ENCODE measurements at regions of chr3 and their contacts with region 1.

Region 1: DNA sequence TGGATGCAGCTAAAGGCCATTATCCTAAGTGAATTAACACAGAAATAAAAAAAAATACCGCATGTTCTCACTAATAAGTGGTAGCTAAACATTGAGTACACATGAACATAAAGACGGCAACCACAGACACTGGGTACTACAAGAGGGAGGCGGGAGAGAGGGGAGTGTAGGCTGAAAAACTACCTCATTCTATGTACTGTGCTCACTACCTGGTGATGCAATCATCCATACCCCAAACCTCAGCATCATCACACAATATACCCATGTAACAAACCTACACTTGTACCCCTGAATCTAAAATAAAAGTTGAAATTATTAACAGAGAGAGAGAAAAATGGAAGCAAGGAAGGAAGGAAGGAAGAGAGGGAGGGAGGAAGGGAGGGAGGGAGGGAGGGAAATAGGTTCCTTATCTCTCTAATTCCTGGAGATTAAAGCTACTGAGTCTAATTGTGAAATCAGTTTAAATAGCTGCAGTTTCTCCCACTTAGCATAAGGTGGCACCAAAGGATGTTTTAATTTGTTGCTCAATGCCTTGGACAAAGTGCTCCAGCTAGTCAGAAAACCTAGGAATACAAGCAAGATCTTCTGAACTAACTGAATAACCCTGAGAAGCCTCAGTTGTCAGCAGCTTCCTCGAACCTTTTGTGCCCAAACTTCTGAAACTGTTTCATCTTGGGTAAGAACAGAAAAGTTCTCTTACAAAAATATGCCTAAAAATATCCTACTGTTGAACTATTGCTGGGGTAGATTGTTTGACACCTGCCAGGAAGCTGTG is 79.4 kb upstream of the ATP11B start:
- DNase-seq: peak; percentile 51
- ATAC-seq: peak; percentile 58
- H3K4me3 ChIP-seq: no peak overlapping the region
- H3K4me3 Mint-ChIP-seq: no peak overlapping the region
- H3K27ac ChIP-seq: no peak overlapping the region
- H3K27ac Mint-ChIP-seq: no peak overlapping the region
- H3K4me1 ChIP-seq: no peaks in the 10 kb centered on the region
- H3K4me1 Mint-ChIP-seq: peaks cover 4% of the 10 kb centered on the region
- H3K27me3 ChIP-seq: no peaks in the 10 kb centered on the region
- H3K27me3 Mint-ChIP-seq: peaks cover 5% of the 10 kb centered on the region
- CTCF ChIP-seq: peak; percentile 70

Region 2: DNA sequence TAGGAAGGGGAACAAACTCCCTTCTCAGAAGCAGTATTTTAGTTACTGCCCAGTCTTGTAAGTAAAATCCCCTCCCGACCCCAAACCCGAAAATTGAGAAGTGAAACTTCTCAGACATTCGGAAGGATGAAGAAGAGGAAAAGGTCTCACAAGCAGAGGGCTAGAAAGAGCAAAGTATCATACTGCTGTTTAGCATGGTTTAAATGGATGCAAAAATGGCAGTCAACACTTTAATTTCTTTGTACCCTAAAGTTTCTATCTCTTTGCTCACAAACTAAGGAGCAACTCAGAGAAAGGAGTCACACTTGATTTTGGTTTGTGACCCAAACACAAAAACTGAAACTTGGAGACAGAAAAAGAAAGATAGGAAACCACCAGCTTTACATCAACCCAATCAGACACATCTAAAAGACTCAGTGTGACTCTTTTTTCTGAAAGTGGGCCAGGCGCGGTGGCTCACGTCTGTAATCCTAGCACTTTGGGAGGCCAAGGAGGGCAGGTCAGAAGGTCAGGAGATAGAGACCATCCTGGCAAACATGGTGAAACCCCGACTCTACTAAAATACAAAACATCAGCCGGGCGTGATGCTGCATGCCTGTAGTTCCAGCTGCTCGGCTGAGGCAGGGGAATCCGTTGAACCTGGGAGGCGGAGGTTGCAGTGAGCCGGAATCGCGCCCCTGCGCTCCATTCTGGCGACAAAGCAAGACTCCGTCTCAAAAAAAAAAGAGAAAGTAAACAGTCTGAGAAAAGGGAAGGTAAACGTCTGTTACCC is 16.2 kb after region 1 on chr3:
- CTCF ChIA-PET with region 1: interaction called, 17 read pairs
- POLR2A ChIA-PET with region 1: no interaction called
- intact Hi-C with region 1: no loop called
- DNase-seq: peak; percentile 70
- ATAC-seq: peak; percentile 62
- H3K4me3 ChIP-seq: peak overlapping the region in 4 of 5 experiments; percentile 18 to 50 (median 37)
- H3K4me3 Mint-ChIP-seq: peak overlapping the region; percentile 84
- H3K27ac ChIP-seq: peak overlapping the region in 1 of 2 donors; percentile 2
- H3K27ac Mint-ChIP-seq: peak overlapping the region; percentile 85
- H3K4me1 ChIP-seq: peaks cover 9 to 16% of the 10 kb centered on the region in 2 donors
- H3K4me1 Mint-ChIP-seq: peaks cover 16% of the 10 kb centered on the region
- H3K27me3 ChIP-seq: no peaks in the 10 kb centered on the region
- H3K27me3 Mint-ChIP-seq: no peaks in the 10 kb centered on the region
- CTCF ChIP-seq: no peak

Region 3: DNA sequence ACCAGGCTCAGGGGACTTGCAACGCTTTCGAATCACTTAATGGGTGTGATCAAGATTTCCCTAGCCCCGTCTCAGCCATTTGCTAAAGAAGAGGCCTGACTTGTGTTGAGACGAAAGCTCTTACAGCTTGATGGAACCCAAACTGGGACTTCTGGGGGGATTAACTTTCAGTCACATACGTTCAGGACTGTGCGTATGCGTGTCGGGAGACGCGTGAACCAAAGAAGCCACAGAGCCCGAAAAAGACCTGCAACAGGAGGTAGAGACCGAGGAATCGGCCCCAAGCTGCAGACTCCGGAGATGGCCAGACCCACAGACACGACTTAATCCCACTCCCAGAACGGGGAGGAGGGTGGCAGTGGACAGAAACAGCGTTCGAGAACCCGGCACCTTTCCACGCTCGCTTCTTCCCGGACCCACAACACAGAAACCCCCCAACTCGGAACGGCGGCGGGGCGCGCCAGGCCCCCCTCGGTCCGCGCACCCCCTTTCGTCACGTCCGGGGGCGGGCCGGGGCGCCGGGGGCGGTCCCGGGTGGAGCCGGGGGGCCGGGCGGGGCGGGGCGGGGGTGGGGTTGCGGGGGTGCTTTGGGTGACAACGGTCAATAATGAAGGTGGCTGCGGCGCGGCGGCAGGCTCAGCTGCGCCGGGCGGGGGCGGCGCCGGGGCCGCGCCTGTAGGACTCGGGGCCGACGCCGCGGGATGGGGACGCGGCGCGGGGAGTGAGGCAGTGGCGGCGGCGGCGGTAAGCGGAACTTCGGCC is 79.2 kb after region 1 on chr3 and contains the start of gene ATP11B:
- CTCF ChIA-PET with region 1: interaction called, 5 read pairs
- POLR2A ChIA-PET with region 1: no interaction called
- intact Hi-C with region 1: loop called (anchors 5 kb)
- DNase-seq: peak; percentile 91
- ATAC-seq: peak; percentile 79
- H3K4me3 ChIP-seq: peak within 1 kb of the TSS; percentile 78 to 99 (median 94)
- H3K4me3 Mint-ChIP-seq: peak within 1 kb of the TSS; percentile 100
- H3K27ac ChIP-seq: peak within 1 kb of the TSS; percentile 92 to 98
- H3K27ac Mint-ChIP-seq: peak within 1 kb of the TSS; percentile 100
- H3K4me1 ChIP-seq: peaks cover 34 to 40% of the 10 kb centered on the region in 2 donors
- H3K4me1 Mint-ChIP-seq: peaks cover 39% of the 10 kb centered on the region
- H3K27me3 ChIP-seq: no peaks in the 10 kb centered on the region
- H3K27me3 Mint-ChIP-seq: no peaks in the 10 kb centered on the region
- CTCF ChIP-seq: no peak
- total RNA-seq, gene ATP11B: 81.9 and 94.6 TPM in 2 replicates

Region 4: DNA sequence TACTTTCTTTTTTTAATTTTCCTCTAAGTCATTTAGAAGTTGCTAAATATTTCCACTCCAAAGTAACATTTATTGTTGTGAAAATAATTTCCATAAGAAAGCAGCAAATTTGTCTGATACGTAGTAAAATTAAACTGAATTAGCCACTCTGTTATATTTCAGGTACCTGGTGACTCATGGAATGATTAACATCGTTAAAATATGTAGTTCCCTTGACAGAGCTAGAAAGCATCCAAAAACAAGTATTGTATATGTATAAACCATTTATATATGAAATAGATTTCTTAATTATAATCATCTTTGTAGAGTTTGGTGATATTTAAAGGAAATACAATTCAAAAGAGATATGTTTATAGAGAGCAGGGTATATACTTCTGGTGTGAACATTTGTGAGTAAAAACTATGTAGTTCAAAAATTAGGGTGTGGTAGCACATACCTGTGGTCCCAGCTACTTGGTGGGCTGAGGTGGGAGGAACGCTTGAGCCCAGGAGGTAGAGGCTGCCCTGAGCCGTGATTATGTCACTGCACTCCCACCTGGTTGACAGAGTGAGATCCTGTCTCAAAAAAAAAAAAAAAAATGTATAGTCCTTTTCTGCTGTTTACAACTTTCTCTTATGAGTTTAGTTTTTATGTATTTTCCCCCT is 116.0 kb after region 1 on chr3:
- CTCF ChIA-PET with region 1: interaction called, 11 read pairs
- POLR2A ChIA-PET with region 1: no interaction called
- intact Hi-C with region 1: no loop called
- DNase-seq: no peak
- ATAC-seq: no peak
- H3K4me3 ChIP-seq: no peak overlapping the region
- H3K4me3 Mint-ChIP-seq: no peak overlapping the region
- H3K27ac ChIP-seq: no peak overlapping the region
- H3K27ac Mint-ChIP-seq: no peak overlapping the region
- H3K4me1 ChIP-seq: no peaks in the 10 kb centered on the region
- H3K4me1 Mint-ChIP-seq: peaks cover 10% of the 10 kb centered on the region
- H3K27me3 ChIP-seq: no peaks in the 10 kb centered on the region
- H3K27me3 Mint-ChIP-seq: no peaks in the 10 kb centered on the region
- CTCF ChIP-seq: no peak

Region 5: GRCh38 chr3:182837855-182838454 is 124.0 kb after region 1 on chr3:
- CTCF ChIA-PET with region 1: interaction called, 45 read pairs
- POLR2A ChIA-PET with region 1: no interaction called
- intact Hi-C with region 1: loop called (anchors 1 kb)
- DNase-seq: peak; percentile 17
- ATAC-seq: no peak
- H3K4me3 ChIP-seq: no peak overlapping the region
- H3K4me3 Mint-ChIP-seq: no peak overlapping the region
- H3K27ac ChIP-seq: no peak overlapping the region
- H3K27ac Mint-ChIP-seq: no peak overlapping the region
- H3K4me1 ChIP-seq: no peaks in the 10 kb centered on the region
- H3K4me1 Mint-ChIP-seq: no peaks in the 10 kb centered on the region
- H3K27me3 ChIP-seq: no peaks in the 10 kb centered on the region
- H3K27me3 Mint-ChIP-seq: no peaks in the 10 kb centered on the region
- CTCF ChIP-seq: peak; percentile 56

Region 6: DNA sequence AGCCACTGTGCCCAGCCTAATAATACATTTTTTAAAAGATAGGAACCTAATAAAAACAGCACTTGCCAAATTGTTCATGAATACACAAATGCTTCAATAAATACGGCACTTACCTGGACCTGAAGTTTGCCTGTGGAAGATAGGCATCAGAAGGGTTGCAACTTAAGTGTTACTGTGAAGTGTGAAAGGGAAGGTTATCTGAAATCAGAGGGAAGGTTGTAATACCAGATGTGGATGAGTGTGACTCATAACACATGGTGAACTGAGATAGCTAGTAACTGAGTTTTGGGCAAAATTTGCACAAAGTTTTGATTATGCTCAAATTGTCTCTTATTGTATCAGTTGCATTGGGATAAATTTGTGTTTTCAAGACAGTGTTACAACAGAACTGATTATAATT is 147.4 kb after region 1 on chr3:
- CTCF ChIA-PET with region 1: interaction called, 11 read pairs
- POLR2A ChIA-PET with region 1: no interaction called
- intact Hi-C with region 1: no loop called
- DNase-seq: no peak
- ATAC-seq: no peak
- H3K4me3 ChIP-seq: no peak overlapping the region
- H3K4me3 Mint-ChIP-seq: no peak overlapping the region
- H3K27ac ChIP-seq: no peak overlapping the region
- H3K27ac Mint-ChIP-seq: no peak overlapping the region
- H3K4me1 ChIP-seq: no peaks in the 10 kb centered on the region
- H3K4me1 Mint-ChIP-seq: no peaks in the 10 kb centered on the region
- H3K27me3 ChIP-seq: no peaks in the 10 kb centered on the region
- H3K27me3 Mint-ChIP-seq: no peaks in the 10 kb centered on the region
- CTCF ChIP-seq: no peak

Region 7: GRCh38 chr3:183122257-183122932 is 408.5 kb after region 1 on chr3:
- CTCF ChIA-PET with region 1: interaction called, 3 read pairs
- POLR2A ChIA-PET with region 1: no interaction called
- intact Hi-C with region 1: loop called (anchors 5 kb)
- DNase-seq: peak; percentile 70
- ATAC-seq: peak; percentile 60
- H3K4me3 ChIP-seq: no peak overlapping the region
- H3K4me3 Mint-ChIP-seq: no peak overlapping the region
- H3K27ac ChIP-seq: no peak overlapping the region
- H3K27ac Mint-ChIP-seq: no peak overlapping the region
- H3K4me1 ChIP-seq: no peaks in the 10 kb centered on the region
- H3K4me1 Mint-ChIP-seq: peaks cover under 1% of the 10 kb centered on the region
- H3K27me3 ChIP-seq: peaks cover 0 to 45% (median 33%) of the 10 kb centered on the region in 4 experiments
- H3K27me3 Mint-ChIP-seq: peaks cover 50% of the 10 kb centered on the region
- CTCF ChIP-seq: peak; percentile 97

Measured in B cell (primary cell).